IMR-90 (cell line): ENCODE measurements at regions of chr1 and their contacts with region 1.

Region 1: GRCh38 chr1:241499910-241500309 is 19.6 kb downstream of the FH start:
- DNase-seq: peak; percentile 62
- ATAC-seq: peak; percentile 71
- H3K4me3 ChIP-seq: no peak overlapping the region
- H3K27ac ChIP-seq: no peak overlapping the region
- H3K4me1 ChIP-seq: no peaks in the 10 kb centered on the region
- H3K27me3 ChIP-seq: no peaks in the 10 kb centered on the region
- CTCF ChIP-seq: peak; percentile 60
- POLR2A ChIP-seq: no peak
- RAD21 ChIP-seq: peak; percentile 77

Region 2: DNA sequence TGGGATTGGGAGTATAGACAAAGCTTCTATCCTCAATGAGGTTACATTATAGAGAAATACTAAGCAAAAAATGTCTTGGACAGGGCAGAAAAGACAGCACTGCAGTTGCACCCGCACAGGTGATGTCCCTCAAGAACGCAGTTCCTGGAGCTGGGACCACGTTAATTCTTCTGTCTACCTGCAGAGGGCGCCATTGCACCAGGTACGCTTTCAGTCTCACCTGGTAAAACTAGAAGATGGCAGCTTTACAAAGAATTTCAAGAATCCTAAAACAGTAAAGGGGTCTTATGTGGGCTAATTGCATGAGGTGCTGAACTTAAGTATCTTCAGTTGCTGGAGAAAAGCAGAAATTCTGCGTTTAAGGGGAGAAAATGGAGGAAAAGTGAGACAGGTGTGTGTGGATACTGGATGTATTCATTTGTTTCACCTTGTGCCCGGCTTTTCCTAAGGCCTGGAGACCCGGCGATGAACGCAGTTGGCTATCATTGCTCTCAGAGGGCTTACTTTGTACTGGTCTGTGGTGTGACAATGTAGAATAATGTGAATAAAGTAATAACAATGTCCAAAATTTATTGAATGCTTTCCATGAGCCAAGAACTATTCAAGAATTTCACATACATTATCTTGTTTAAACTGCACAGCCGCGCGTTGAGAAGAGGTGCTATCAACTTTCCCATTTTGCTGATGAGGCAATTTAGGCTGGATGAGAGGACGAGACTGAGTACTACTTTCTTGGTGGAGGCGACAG is 611.7 kb before region 1 on chr1:
- CTCF ChIA-PET with region 1: interaction called, 3 read pairs
- POLR2A ChIA-PET with region 1: no interaction called
- dilution Hi-C with region 1: no loop called
- in situ Hi-C with region 1: no loop called
- intact Hi-C with region 1: loop called (anchors 5 kb)
- DNase-seq: no peak
- ATAC-seq: no peak
- H3K4me3 ChIP-seq: no peak overlapping the region
- H3K27ac ChIP-seq: no peak overlapping the region
- H3K4me1 ChIP-seq: no peaks in the 10 kb centered on the region
- H3K27me3 ChIP-seq: no peaks in the 10 kb centered on the region
- CTCF ChIP-seq: peak; percentile 40
- POLR2A ChIP-seq: no peak
- RAD21 ChIP-seq: peak; percentile 48

Region 3: GRCh38 chr1:241423541-241424479 is 76.1 kb before region 1 on chr1:
- CTCF ChIA-PET with region 1: no interaction called
- POLR2A ChIA-PET with region 1: no interaction called
- dilution Hi-C with region 1: no loop called
- in situ Hi-C with region 1: no loop called
- intact Hi-C with region 1: no loop called
- DNase-seq: peak; percentile 63
- ATAC-seq: peak; percentile 77
- H3K4me3 ChIP-seq: peak overlapping the region; percentile 60
- H3K27ac ChIP-seq: peak overlapping the region; percentile 14; the same call in 1 of the 2 replicates
- H3K4me1 ChIP-seq: peaks cover 3% of the 10 kb centered on the region; the same call in 1 of the 2 replicates
- H3K27me3 ChIP-seq: no peaks in the 10 kb centered on the region
- CTCF ChIP-seq: 0 out of 2 replicates have a peak, but pooled peaks have one; percentile 4
- POLR2A ChIP-seq: no peak
- RAD21 ChIP-seq: no peak

Region 4: DNA sequence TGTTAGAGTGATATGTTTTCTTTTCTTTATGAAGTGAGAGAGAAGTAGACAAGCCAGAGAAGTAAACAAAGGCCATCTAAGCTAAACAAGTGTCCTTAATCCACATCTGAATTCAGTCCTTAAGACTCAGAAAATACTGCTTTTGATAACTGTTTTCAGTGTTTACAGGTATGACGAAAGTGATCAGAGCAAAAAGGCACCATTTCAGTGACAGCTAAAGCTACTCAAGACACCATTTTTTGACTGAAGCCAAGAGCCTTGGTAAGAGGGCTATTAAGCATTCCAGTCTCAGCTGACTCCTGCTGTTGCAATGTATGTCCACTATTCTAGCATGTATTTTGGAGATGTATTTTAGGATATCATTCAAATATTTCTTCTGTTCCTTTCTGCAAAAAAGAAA is 36.4 kb after region 1 on chr1:
- CTCF ChIA-PET with region 1: no interaction called
- POLR2A ChIA-PET with region 1: no interaction called
- dilution Hi-C with region 1: no loop called
- in situ Hi-C with region 1: no loop called
- intact Hi-C with region 1: no loop called
- DNase-seq: peak; percentile 5
- ATAC-seq: peak; percentile 51; the same call in 1 of the 2 replicates
- H3K4me3 ChIP-seq: no peak overlapping the region
- H3K27ac ChIP-seq: no peak overlapping the region
- H3K4me1 ChIP-seq: no peaks in the 10 kb centered on the region
- H3K27me3 ChIP-seq: peaks cover 7% of the 10 kb centered on the region
- CTCF ChIP-seq: no peak
- POLR2A ChIP-seq: no peak
- RAD21 ChIP-seq: no peak